Posterior vena cava (tissue), 2 donors: ENCODE measurements at regions of chr13 and their contacts with region 1.

Region 1: GRCh38 chr13:74485757-74486156 is 351.6 kb upstream of the KLF12 start:
- DNase-seq: no peak

Region 2: GRCh38 chr13:72890546-72890945 is 1595.2 kb before region 1 on chr13:
- intact Hi-C with region 1: no loop called
- DNase-seq: no peak

Region 3: GRCh38 chr13:73107481-73107880 is 1378.3 kb before region 1 on chr13:
- intact Hi-C with region 1: no loop called
- DNase-seq: no peak

Region 4: GRCh38 chr13:75123428-75123827 is 637.7 kb after region 1 on chr13:
- intact Hi-C with region 1: loop called in 1 of 2 experiments (anchors 5 kb)
- DNase-seq: no peak